ENCODE measurements at regions of chr1 and their contacts with region 1.

Region 1: GRCh38 chr1:108118018-108118902 is 81.9 kb downstream of the SLC25A24 start:
- DNase-seq: no peak
- ATAC-seq: peak in 1 of 4 donors; percentile 72
- H3K4me3 ChIP-seq: no peak overlapping the region
- H3K27ac ChIP-seq: no peak overlapping the region
- H3K4me1 ChIP-seq: no peaks in the 10 kb centered on the region
- H3K27me3 ChIP-seq: no peaks in the 10 kb centered on the region
- CTCF ChIP-seq: no peak

Region 2: DNA sequence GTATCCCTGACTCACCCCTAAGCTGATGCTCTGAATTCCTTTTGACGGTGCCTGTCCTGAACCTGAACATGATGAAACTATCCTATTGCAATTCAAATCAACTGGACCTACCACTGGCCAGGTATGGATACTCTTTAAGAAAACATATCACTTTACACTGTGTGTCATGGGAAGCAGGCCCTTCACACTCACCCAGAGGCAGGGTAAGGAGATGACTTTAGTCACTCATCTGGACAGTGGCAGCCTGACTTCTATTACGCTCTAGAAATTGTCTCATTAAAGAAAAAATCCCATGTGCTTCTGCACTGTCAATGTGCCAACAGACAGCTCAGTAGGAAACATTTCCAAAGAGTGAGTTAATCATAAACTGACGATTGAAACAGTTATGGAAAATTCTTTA is 247.6 kb before region 1 on chr1:
- intact Hi-C with region 1: loop called in 1 of 2 experiments (anchors 5 kb)
- DNase-seq: no peak
- ATAC-seq: no peak
- H3K4me3 ChIP-seq: no peak overlapping the region
- H3K27ac ChIP-seq: no peak overlapping the region
- H3K4me1 ChIP-seq: no peaks in the 10 kb centered on the region
- H3K27me3 ChIP-seq: no peaks in the 10 kb centered on the region
- CTCF ChIP-seq: no peak

Region 3: GRCh38 chr1:108182959-108183700 is 64.9 kb after region 1 on chr1:
- intact Hi-C with region 1: no loop called
- DNase-seq: no peak
- ATAC-seq: no peak
- H3K4me3 ChIP-seq: no peak overlapping the region
- H3K27ac ChIP-seq: peak overlapping the region; percentile 7
- H3K4me1 ChIP-seq: peaks cover 14% of the 10 kb centered on the region
- H3K27me3 ChIP-seq: no peaks in the 10 kb centered on the region
- CTCF ChIP-seq: no peak

Measured in psoas muscle (tissue), 8 donors.